ENCODE measurements at regions of chr6 and their contacts with region 1.

Region 1: GRCh38 chr6:168625602-168626001 is 184.6 kb downstream of the SMOC2 start:
- DNase-seq: no peak
- ATAC-seq: no peak
- H3K4me3 ChIP-seq: no peak overlapping the region
- H3K4me3 Mint-ChIP-seq: no peak overlapping the region
- H3K27ac ChIP-seq: no peak overlapping the region
- H3K27ac Mint-ChIP-seq: no peak overlapping the region
- H3K4me1 ChIP-seq: no peaks in the 10 kb centered on the region
- H3K4me1 Mint-ChIP-seq: no peaks in the 10 kb centered on the region
- H3K27me3 ChIP-seq: no peaks in the 10 kb centered on the region
- H3K27me3 Mint-ChIP-seq: peaks cover 7% of the 10 kb centered on the region
- CTCF ChIP-seq: no peak

Region 2: GRCh38 chr6:168677834-168678476 is 52.4 kb after region 1 on chr6:
- CTCF ChIA-PET with region 1: no interaction called
- POLR2A ChIA-PET with region 1: no interaction called
- intact Hi-C with region 1: loop called in 1 of 2 experiments (anchors 5 kb)
- DNase-seq: no peak
- ATAC-seq: no peak
- H3K4me3 ChIP-seq: no peak overlapping the region
- H3K4me3 Mint-ChIP-seq: no peak overlapping the region
- H3K27ac ChIP-seq: no peak overlapping the region
- H3K27ac Mint-ChIP-seq: no peak overlapping the region
- H3K4me1 ChIP-seq: no peaks in the 10 kb centered on the region
- H3K4me1 Mint-ChIP-seq: no peaks in the 10 kb centered on the region
- H3K27me3 ChIP-seq: no peaks in the 10 kb centered on the region
- H3K27me3 Mint-ChIP-seq: no peaks in the 10 kb centered on the region
- CTCF ChIP-seq: no peak

Measured in CD4-positive, alpha-beta T cell (primary cell).